Motor neuron (in vitro differentiated cells): ENCODE measurements at regions of chr13 and their contacts with region 1.

Region 1: DNA sequence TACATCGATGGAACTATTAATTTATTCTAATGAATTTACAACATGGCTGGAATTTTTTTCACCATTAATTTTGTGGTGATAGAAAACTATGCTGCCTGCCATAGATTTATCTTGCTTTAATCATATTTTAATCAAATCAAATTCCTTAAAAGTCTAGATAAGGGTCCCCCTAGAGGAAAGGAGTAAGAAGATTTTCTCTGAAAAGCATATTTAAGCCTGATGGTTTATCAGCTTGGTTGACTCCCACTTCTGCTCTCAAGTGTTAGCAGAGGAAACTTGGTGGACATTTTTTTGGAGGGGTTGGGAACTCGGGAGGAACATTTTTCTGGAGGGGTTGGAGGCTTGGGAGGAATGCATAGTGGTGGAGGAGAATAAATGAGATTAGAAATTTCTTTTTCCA is 253.3 kb downstream of the KCNRG start:
- ATAC-seq: no peak
- H3K4me3 ChIP-seq: no peak overlapping the region
- H3K27ac ChIP-seq: no peak overlapping the region
- H3K4me1 ChIP-seq: no peaks in the 10 kb centered on the region

Region 2: DNA sequence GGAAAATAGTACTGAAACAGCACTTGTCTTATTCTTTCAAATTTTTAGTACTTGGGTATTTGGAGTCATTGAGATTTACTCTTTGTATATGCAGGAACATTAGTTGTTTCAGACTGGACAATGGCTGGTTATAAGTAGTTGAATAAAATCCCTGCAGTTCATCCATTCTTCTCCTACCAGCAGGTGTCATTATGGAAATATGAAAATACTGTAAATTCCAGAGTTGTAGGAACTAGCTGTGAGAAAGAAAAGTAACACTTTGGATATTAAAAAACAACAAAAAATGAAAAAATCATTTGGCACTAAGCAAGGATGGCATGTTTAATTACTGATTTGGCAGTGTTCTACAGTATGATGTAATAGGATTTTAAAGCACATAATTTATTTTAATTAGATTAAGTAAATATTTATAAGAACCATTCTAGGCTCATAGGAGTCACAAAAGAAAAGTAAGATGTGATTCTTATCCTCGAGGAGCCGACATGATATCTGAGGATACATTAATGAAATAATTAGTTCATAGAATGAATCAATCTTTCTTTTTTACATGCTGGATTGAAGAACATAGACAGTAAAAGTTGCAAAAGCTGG is 98.0 kb before region 1 on chr13:
- in situ Hi-C with region 1: loop called in 1 of 9 experiments (anchors 25 kb)
- ATAC-seq: no peak
- H3K4me3 ChIP-seq: no peak overlapping the region
- H3K27ac ChIP-seq: no peak overlapping the region
- H3K4me1 ChIP-seq: no peaks in the 10 kb centered on the region

Region 3: DNA sequence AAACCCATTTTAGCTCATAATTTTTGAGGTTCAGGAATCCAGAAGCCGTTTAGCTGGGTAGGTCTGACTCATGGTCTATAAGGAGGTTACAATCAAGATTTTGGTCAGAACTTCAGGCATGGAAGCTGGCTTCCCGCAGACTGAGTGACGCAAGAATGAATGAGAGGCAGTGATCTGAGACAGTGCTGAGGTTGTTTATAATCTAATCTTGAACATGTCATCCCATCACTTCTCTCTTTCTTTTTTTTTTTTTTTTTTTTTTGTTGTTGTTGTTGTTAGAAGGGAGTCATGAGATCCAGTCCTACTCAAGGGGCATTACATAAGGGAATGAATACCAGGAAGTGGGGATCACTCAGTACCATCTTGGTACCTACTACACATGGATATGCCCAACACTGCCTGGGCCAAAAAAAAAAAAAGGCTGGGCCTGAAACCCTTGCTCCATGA is 357.6 kb after region 1 on chr13:
- in situ Hi-C with region 1: no loop called
- ATAC-seq: peak in 2 of 8 experiments; percentile 41 to 81
- H3K4me3 ChIP-seq: no peak overlapping the region
- H3K27ac ChIP-seq: no peak overlapping the region
- H3K4me1 ChIP-seq: no peaks in the 10 kb centered on the region